ENCODE measurements at regions of chr1 and their contacts with region 1.

Region 1: DNA sequence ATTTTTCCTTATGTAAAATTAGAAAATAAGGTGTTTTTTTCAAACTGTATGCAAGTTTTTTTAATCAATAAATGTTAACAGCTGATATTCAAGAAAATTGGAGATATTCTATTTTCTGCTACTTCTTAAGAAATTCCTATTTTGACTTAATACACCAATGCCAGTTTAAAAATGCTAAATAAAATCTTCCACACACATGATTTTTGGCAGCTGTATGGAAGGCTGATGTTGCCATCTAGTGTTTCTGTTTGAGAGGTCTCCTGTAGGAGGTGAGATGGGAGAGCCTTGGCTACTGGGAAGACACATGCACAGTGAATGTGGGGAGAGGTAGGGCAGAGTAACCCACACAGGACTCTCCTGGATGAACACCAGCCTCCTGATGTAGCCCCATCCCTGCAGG is 29.2 kb upstream of the OR2B11 start:
- DNase-seq: peak in 1 of 2 donors; percentile 11
- ATAC-seq: peak; percentile 86

Region 2: GRCh38 chr1:247390116-247390791 is 96.8 kb before region 1 on chr1:
- intact Hi-C with region 1: loop called in 1 of 2 experiments (anchors 2 kb)
- DNase-seq: peak; percentile 74 to 84
- ATAC-seq: peak; percentile 99

Measured in left colon (tissue), 2 donors.